ENCODE measurements at regions of chr20 and their contacts with region 1.

Region 1: DNA sequence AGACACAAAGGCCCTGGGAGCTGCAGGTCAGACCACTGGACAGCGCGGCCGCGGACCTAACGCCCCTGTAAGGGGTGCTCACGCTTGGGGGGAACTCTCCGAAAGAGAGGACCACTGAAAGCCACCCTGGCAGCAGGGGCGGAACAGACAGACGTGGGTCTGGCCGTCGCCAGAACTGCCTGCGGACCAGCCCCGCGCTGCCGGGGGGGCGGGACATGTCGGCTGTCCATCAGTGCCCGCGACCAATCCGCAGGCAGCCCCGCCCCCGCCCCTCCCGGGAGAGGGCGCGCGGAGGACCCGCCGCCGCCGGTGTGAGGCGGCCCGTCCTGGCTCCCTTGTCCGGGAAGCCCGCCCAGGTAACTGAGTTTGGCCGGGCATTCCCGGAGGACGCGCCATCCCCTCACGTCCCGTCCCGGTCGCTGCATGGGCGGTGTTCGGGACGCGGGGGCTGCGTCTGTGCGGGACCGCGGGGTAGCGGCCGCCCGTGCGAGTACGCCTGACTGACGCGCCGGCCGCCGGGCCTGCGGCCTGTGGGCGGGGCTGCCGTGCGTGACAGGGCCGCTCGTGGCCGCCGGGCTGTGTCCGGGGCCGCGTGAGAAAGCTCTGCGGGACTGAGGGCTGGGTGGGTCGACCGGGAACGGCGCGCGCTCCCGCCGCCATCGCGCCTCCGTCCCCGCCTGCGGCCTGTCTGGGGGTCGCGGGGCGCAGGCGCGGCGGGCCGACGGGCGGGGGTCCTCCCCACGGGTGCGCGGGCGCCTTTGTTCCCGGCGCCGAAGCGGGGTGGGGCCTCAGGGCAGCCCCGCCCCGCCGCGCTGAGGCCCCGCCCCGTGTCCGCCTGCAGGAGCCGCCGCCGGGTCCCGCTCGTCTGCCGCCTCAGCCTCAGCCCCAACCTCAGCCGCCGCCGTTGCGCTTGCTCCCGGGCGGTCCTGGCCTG is at the start of gene PLCG1:
- DNase-seq: no peak
- ATAC-seq: peak; percentile 63
- H3K4me3 ChIP-seq: peak within 1 kb of the TSS; percentile 81
- H3K27ac ChIP-seq: peak within 1 kb of the TSS; percentile 88
- H3K4me1 ChIP-seq: peaks cover 56% of the 10 kb centered on the region
- H3K27me3 ChIP-seq: no peaks in the 10 kb centered on the region
- CTCF ChIP-seq: no peak
- EP300 ChIP-seq: no peak
- POLR2A ChIP-seq: peak; percentile 65
- RAD21 ChIP-seq: no peak
- polyA plus RNA-seq, gene PLCG1: 2.6 to 3.0 TPM

Region 2: GRCh38 chr20:40962730-40963504 is 174.0 kb before region 1 on chr20:
- CTCF ChIA-PET with region 1: interaction called, 37 read pairs
- POLR2A ChIA-PET with region 1: interaction called, 5 read pairs
- RAD21 ChIA-PET with region 1: interaction called, 20 read pairs
- SMC1A ChIA-PET with region 1: interaction called, 4 read pairs
- in situ Hi-C with region 1: no loop called
- intact Hi-C with region 1: no loop called
- DNase-seq: no peak
- ATAC-seq: peak; percentile 93
- H3K4me3 ChIP-seq: no peak overlapping the region
- H3K27ac ChIP-seq: no peak overlapping the region
- H3K4me1 ChIP-seq: no peaks in the 10 kb centered on the region
- H3K27me3 ChIP-seq: no peaks in the 10 kb centered on the region; a peak in 1 of 4 replicates
- CTCF ChIP-seq: peak; percentile 76 to 92 (median 78)
- EP300 ChIP-seq: no peak
- POLR2A ChIP-seq: no peak
- RAD21 ChIP-seq: peak; percentile 91

Region 3: GRCh38 chr20:41047975-41048305 is 89.0 kb before region 1 on chr20:
- CTCF ChIA-PET with region 1: interaction called, 11 read pairs
- POLR2A ChIA-PET with region 1: interaction called, 3 read pairs
- RAD21 ChIA-PET with region 1: interaction called, 4 read pairs
- SMC1A ChIA-PET with region 1: interaction called, 4 read pairs
- in situ Hi-C with region 1: no loop called
- intact Hi-C with region 1: no loop called
- DNase-seq: no peak
- ATAC-seq: peak; percentile 69
- H3K4me3 ChIP-seq: peak overlapping the region; percentile 64
- H3K27ac ChIP-seq: peak overlapping the region; percentile 76
- H3K4me1 ChIP-seq: peaks cover 44% of the 10 kb centered on the region
- H3K27me3 ChIP-seq: no peaks in the 10 kb centered on the region
- CTCF ChIP-seq: no peak
- EP300 ChIP-seq: no peak
- POLR2A ChIP-seq: no peak
- RAD21 ChIP-seq: no peak

Region 4: DNA sequence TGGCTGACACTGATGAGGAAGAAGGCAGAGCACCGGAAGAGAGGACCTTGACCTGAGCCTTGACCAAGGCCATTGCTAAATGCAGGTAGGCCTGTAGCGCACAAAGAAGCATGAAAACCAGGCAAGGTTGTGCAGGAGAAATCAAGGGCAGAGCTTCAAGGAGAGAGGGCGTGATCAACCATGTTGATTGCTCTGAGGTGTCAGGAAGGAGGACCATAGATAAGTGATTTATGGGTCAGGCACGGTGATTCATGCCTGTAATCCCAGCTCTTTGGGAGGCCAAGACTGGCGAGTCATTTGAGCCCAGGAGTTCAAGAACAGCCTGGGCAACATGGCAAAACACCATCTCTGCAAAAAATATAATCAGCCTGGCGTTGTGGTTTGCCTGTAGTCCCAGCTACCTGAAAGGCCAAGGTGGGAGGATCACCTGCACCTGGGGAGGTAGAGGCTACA is 12.8 kb after region 1 on chr20:
- CTCF ChIA-PET with region 1: interaction called, 105 read pairs
- POLR2A ChIA-PET with region 1: interaction called, 84 read pairs
- RAD21 ChIA-PET with region 1: interaction called, 42 read pairs
- SMC1A ChIA-PET with region 1: interaction called, 71 read pairs
- in situ Hi-C with region 1: no loop called
- intact Hi-C with region 1: no loop called
- DNase-seq: no peak
- ATAC-seq: no peak
- H3K4me3 ChIP-seq: no peak overlapping the region
- H3K27ac ChIP-seq: no peak overlapping the region
- H3K4me1 ChIP-seq: peaks cover 19% of the 10 kb centered on the region
- H3K27me3 ChIP-seq: no peaks in the 10 kb centered on the region
- CTCF ChIP-seq: no peak
- EP300 ChIP-seq: no peak
- POLR2A ChIP-seq: no peak
- RAD21 ChIP-seq: no peak

Region 5: GRCh38 chr20:41232973-41233926 is 96.3 kb after region 1 on chr20:
- CTCF ChIA-PET with region 1: interaction called, 110 read pairs
- POLR2A ChIA-PET with region 1: interaction called, 10 read pairs
- RAD21 ChIA-PET with region 1: interaction called, 67 read pairs
- SMC1A ChIA-PET with region 1: interaction called, 59 read pairs
- in situ Hi-C with region 1: no loop called
- intact Hi-C with region 1: loop called (anchors 1 kb)
- DNase-seq: no peak
- ATAC-seq: no peak
- H3K4me3 ChIP-seq: no peak overlapping the region
- H3K27ac ChIP-seq: no peak overlapping the region
- H3K4me1 ChIP-seq: no peaks in the 10 kb centered on the region
- H3K27me3 ChIP-seq: no peaks in the 10 kb centered on the region
- CTCF ChIP-seq: no peak
- EP300 ChIP-seq: no peak
- POLR2A ChIP-seq: no peak
- RAD21 ChIP-seq: no peak

Region 6: GRCh38 chr20:41339507-41340326 is 202.8 kb after region 1 on chr20:
- CTCF ChIA-PET with region 1: interaction called, 50 read pairs
- POLR2A ChIA-PET with region 1: no interaction called
- RAD21 ChIA-PET with region 1: interaction called, 16 read pairs
- SMC1A ChIA-PET with region 1: interaction called, 27 read pairs
- in situ Hi-C with region 1: no loop called
- intact Hi-C with region 1: loop called (anchors 1 kb)
- DNase-seq: no peak
- ATAC-seq: peak; percentile 96
- H3K4me3 ChIP-seq: peak overlapping the region; percentile 68
- H3K27ac ChIP-seq: no peak overlapping the region
- H3K4me1 ChIP-seq: peaks cover 5% of the 10 kb centered on the region
- H3K27me3 ChIP-seq: no peaks in the 10 kb centered on the region
- CTCF ChIP-seq: peak; percentile 92 to 96 (median 95)
- EP300 ChIP-seq: no peak
- POLR2A ChIP-seq: no peak
- RAD21 ChIP-seq: peak; percentile 96